ENCODE measurements at regions of chr17 and their contacts with region 1.

Region 1: DNA sequence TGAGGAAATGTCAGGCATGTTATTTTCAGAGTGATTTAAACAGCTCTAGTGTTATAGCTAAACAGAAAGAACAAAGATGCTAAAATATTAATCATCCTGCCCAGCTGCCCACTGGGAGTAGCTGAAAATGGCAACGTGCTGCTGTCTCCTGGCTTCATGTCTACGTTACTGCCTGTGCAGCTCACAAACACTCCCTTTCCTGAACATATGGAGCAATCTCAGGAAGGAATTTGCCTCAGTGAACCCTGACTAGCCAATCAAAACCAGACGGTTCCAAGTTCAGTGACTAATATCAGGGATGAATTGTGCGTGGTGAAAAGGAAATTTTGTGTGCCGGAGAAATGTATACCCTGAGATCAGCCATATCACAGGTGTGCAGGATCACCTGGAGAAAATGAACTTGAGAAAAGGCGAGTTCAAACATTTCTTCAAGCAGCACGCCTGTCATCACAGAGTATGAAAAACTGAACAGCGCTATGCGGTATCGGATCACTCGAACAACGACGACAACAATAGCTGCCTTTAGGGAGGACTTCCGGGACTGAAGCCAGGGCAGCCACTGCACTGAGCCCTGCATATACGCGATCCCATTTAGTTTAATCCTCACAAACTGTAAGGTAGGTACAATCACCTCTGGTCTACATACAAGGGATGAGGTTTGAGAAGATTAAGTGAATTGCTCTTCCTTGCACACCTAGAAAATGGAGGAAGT is 110.3 kb downstream of the STX8 start:
- DNase-seq: no peak
- H3K4me3 ChIP-seq: no peak overlapping the region
- H3K27ac ChIP-seq: no peak overlapping the region
- H3K4me1 ChIP-seq: no peaks in the 10 kb centered on the region
- H3K27me3 ChIP-seq: no peaks in the 10 kb centered on the region
- CTCF ChIP-seq: no peak

Region 2: DNA sequence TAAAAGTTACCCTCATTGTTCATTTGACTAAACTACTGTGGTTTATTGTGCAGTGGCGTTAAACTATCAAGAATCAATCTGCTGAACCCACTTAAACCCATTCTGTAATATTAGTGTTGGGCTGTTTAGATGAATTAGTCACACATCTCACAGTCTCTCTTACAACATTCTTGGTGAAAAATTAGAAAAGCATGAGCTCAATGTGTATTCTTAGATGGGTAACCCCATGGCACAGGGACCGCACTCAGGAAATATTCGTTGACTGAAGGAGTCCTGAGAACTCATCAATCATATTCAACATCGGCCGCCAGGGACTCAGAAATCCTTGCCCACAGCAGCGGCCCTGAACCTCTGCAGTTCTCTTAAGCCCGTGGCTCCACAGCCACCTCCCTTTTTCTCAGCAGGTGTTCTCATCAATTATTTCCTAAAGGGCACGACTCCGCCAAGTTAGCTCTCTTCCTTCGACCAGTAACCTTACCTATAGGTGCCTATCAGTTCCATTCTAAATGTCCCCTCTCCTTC is 45.4 kb before region 1 on chr17:
- CTCF ChIA-PET with region 1: no interaction called
- dilution Hi-C with region 1: loop called (anchors 5 kb)
- in situ Hi-C with region 1: no loop called
- intact Hi-C with region 1: no loop called
- DNase-seq: no peak
- H3K4me3 ChIP-seq: no peak overlapping the region
- H3K27ac ChIP-seq: no peak overlapping the region
- H3K4me1 ChIP-seq: no peaks in the 10 kb centered on the region
- H3K27me3 ChIP-seq: no peaks in the 10 kb centered on the region
- CTCF ChIP-seq: no peak

Measured in mammary epithelial cell (primary cell).